Sigmoid colon (tissue), 7 donors: ENCODE measurements at regions of chr20 and their contacts with region 1.

Region 1: DNA sequence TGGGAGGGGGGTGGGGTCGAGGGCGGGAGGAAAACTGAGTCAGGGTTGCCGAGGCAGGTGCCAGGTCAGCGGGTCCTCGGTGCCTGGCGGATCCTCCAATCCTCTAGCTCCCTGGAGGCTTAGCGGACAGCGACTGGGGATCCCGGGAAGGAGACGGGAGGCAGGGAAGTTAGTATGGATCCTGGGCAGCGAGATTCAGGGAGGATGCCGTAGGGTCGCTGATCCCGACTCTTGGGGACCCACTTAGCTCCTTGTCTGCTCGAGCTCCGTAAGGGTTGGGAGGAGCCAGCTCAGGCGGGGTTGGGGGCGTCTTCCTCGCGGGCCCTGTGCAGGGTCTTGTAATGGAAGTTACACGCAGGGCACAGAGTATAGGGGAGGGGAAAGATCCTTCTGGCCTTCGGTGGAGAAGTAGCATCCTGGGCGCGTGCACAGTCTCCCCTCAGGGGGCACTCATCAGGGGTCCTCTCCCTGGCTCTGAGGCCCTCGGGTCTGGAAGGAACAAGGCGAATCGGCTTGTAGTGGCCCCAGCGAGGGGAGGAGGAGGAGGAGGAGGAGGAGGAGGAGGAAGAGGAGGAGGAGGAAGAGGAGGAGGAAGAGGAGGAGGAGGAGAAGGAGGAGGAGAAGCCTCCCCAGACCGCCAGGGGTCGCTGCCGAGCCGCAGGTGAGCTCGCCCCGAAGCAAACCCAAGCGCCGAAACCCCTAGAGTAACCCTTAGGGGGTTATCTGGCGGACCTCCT is 6.4 kb upstream of the SLC12A5 start:
- DNase-seq: no peak
- H3K4me3 ChIP-seq: no peak overlapping the region
- H3K27ac ChIP-seq: no peak overlapping the region
- H3K4me1 ChIP-seq: peaks cover 0 to 19% (median 17%) of the 10 kb centered on the region in 4 donors
- H3K27me3 ChIP-seq: peaks cover 23 to 97% (median 59%) of the 10 kb centered on the region in 3 donors
- CTCF ChIP-seq: peak; percentile 57 to 84 (median 79)
- EP300 ChIP-seq: no peak
- POLR2A ChIP-seq: no peak

Region 2: DNA sequence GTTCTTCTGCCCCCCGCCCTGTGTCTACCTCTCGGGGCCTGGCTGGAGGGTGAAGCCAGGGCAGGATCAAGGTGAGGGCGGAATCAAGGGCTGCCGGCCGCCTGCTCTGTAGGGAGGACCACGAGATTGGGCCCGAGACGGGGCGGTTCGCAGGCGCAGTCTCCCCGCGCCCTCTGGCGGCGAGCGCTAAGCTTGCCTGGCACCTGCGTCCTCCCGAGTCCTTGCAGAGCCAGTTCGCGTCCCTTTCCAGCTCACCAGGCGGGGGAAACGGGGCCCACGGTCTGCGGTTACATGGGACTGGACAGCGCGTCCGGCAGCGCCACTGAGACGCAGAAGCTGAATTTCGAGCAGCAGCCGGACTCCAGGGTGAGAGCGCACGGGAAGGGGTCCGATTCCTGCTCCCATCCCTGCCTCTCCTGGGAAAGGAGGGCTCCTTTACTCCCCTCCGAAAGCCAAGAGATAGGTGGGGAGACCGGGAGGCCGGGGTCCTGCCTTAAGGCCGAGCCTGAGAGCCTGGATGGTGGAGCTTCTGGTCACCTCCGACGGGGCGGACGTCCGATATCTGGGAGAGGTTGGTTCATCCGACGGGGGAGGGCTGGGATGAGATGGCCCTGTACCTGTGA is 710.9 kb before region 1 on chr20:
- intact Hi-C with region 1: no loop called
- DNase-seq: no peak
- H3K4me3 ChIP-seq: no peak overlapping the region
- H3K27ac ChIP-seq: no peak overlapping the region
- H3K4me1 ChIP-seq: peaks cover 0 to 17% (median 6%) of the 10 kb centered on the region in 4 donors
- H3K27me3 ChIP-seq: peaks cover 4 to 61% (median 31%) of the 10 kb centered on the region in 3 donors
- CTCF ChIP-seq: peak; percentile 38 to 76 (median 62)
- EP300 ChIP-seq: no peak
- POLR2A ChIP-seq: no peak

Region 3: DNA sequence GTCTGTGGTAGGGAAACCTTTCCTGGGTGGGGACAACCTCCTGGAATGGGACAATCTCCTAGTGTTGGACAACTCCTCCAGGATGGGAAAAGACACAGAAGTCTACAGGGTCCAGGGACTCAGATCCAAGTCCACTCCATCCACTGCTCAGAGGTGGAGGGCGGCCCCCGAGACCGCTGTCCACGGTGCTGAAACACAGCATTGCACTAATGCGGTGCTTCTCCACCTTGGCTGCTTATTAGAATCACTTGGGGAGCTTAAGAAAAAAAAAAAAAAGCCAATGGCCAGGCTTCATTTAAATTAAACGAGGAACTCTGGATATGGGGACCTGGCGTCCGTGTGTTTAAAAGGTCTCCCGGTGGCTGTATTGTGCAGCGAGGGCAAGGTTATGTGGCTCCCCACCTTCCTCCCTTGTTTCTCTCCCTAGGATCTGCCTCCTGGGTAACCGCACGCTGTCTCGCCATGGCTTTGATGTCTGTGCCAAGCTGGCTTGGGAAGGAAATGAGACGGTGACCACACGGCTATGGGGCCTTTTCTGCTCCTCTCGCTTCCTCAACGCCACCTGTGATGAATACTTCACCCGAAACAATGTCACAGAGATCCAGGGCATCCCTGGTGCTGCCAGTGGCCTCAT is 18.4 kb after region 1 on chr20:
- intact Hi-C with region 1: no loop called
- DNase-seq: no peak
- H3K4me3 ChIP-seq: no peak overlapping the region
- H3K27ac ChIP-seq: no peak overlapping the region
- H3K4me1 ChIP-seq: no peaks in the 10 kb centered on the region
- H3K27me3 ChIP-seq: peaks cover 0 to 34% (median 6%) of the 10 kb centered on the region in 3 donors
- CTCF ChIP-seq: no peak
- EP300 ChIP-seq: no peak
- POLR2A ChIP-seq: no peak

Region 4: GRCh38 chr20:46174469-46175128 is 152.0 kb after region 1 on chr20:
- intact Hi-C with region 1: loop called (anchors 2 kb)
- DNase-seq: peak; percentile 72
- H3K4me3 ChIP-seq: no peak overlapping the region
- H3K27ac ChIP-seq: no peak overlapping the region
- H3K4me1 ChIP-seq: no peaks in the 10 kb centered on the region
- H3K27me3 ChIP-seq: peaks cover 21 to 69% (median 42%) of the 10 kb centered on the region in 3 donors
- CTCF ChIP-seq: peak in 2 of 4 experiments; percentile 23 to 57
- EP300 ChIP-seq: no peak
- POLR2A ChIP-seq: no peak

Region 5: GRCh38 chr20:46349035-46349741 is 326.6 kb after region 1 on chr20:
- intact Hi-C with region 1: loop called (anchors 5 kb)
- DNase-seq: no peak
- H3K4me3 ChIP-seq: no peak overlapping the region
- H3K27ac ChIP-seq: no peak overlapping the region
- H3K4me1 ChIP-seq: peaks cover 0 to 18% (median 15%) of the 10 kb centered on the region in 4 donors
- H3K27me3 ChIP-seq: no peaks in the 10 kb centered on the region
- CTCF ChIP-seq: peak; percentile 19 to 62 (median 48)
- EP300 ChIP-seq: no peak
- POLR2A ChIP-seq: no peak